Mammary epithelial cell (primary cell): ENCODE measurements at regions of chr2 and their contacts with region 1.

Region 1: DNA sequence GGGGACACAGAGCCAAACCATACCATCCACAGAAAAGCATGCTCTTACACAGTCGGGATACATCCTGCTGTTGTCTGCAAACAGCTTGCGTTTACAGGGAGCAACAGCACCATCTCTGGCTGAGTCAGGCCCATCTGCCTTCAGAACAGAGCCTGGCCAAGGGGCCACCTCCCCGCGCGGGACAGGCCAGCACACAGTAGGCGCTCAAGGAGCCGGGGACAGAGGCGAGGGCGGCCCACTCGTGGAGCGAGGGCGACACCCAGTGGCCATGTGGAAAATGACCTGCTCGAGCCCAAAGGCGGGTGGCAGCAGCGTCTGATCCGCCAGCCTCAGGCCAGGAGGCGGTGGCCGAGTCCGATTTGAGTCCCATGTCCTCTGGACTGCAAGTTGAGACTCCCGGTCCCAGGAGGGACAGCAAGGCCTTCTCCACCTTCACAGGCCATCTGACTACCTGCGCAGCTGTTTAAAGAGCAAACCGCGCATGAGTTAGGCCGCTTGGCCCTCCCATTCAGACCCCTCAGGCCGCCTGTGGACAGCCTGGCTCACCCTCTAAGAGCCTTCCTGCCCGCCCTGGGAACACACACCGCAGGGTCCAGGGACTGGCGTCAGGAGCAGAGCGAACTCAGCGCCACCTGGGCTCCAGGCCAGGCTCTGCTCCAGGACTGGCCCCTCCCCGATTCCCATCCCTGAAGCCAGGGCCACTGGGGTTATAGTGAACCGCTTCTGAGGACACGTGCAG is 38.3 kb downstream of the TTC32 start:
- DNase-seq: peak; percentile 26
- H3K4me3 ChIP-seq: no peak overlapping the region
- H3K27ac ChIP-seq: no peak overlapping the region
- H3K4me1 ChIP-seq: peaks cover 26% of the 10 kb centered on the region
- H3K27me3 ChIP-seq: no peaks in the 10 kb centered on the region
- CTCF ChIP-seq: peak; percentile 63 to 93

Region 2: DNA sequence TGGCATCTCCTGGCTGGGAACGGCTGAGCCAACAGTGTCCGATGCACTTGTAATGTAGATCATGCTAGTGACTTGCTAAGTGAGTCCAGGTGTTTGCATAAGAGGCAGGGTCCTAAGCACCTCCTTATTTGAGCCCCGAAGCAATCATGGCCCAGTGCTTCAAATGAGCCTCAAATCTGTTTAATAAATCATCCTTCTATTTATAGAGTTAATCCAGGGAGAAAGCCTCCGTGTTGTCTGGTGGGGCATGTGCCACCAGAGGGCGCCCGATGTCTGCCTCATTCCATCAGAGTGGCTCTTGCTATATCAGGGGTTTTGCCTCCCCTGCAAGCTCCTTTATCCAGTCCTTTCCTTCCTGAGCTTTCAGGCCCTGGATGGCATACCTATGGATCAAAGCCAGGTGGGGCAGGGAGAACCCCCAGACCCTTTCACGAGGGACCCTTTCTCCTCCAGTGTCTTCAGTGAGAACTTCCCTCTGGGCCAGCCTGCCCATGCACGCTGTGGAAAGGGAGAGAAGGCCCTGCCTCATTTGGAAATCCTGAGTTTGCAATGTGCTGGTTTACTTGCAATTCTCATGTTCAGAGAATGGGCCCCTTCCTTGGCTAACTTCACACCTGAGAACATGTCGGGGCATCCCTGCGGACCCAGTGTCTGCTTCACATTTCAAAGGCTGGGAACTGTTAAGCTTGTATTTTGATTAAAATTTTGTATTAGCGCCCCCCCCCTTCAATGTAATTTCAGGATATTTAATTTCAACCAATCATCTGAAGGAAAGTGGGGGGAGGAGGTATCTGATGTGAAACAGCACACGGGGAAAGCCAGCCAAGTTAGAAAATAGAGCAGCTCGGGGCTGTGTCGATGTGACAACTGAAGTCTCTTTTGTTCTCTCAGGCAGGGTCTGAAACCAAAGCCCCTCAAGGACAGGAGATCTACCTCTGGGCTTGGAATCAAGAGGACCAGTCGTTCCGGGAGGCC is 1342.7 kb before region 1 on chr2:
- CTCF ChIA-PET with region 1: no interaction called
- dilution Hi-C with region 1: loop called (anchors 25 kb)
- in situ Hi-C with region 1: loop called (anchors 10 to 25 kb)
- intact Hi-C with region 1: loop called (anchors 2 kb)
- DNase-seq: peak; percentile 50
- H3K4me3 ChIP-seq: no peak overlapping the region
- H3K27ac ChIP-seq: no peak overlapping the region
- H3K4me1 ChIP-seq: no peaks in the 10 kb centered on the region
- H3K27me3 ChIP-seq: no peaks in the 10 kb centered on the region
- CTCF ChIP-seq: peak; percentile 91 to 92

Region 3: DNA sequence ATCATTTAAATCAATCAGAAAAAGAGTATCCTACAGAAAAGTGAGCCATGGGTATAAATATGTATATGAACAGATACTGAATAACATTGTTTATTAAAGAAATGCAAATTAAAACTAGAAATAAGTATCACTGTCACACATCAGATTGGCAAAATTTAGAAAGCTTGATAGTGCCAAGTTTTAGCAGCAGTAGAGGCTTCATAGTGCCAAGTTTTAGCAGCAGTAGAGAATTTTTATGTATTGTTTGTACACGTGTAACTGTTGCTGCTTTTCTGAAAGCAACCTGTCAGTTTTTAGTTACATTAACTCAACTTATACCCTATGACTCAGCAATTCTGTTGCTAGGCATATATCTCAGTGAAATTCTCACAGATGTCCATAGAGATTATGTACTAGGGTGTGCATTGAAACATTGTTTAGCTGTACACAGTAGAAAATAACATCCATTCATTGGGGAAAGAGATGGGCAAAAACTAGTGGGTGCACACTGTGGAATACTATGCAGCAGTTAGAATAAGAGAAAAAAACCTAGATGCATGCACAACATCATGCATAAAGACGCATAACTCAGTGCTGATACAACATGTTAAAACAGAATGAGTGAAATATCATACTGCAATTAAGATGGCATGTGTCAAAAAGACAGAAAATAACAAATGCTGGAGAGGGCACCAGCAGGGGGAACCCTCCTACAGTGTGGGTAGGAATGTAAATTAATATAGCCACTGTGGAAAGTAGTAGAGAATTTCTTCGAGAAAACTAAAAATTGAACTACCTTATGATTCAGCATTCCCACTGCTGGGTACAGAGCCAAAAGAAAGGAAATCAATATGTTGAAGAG is 979.6 kb before region 1 on chr2:
- CTCF ChIA-PET with region 1: no interaction called
- dilution Hi-C with region 1: no loop called
- in situ Hi-C with region 1: no loop called
- intact Hi-C with region 1: loop called (anchors 10 kb)
- DNase-seq: peak; percentile 32
- H3K4me3 ChIP-seq: no peak overlapping the region
- H3K27ac ChIP-seq: no peak overlapping the region
- H3K4me1 ChIP-seq: no peaks in the 10 kb centered on the region
- H3K27me3 ChIP-seq: no peaks in the 10 kb centered on the region
- CTCF ChIP-seq: peak; percentile 63 to 64

Region 4: GRCh38 chr2:19667085-19667484 is 196.4 kb before region 1 on chr2:
- CTCF ChIA-PET with region 1: no interaction called
- dilution Hi-C with region 1: no loop called
- in situ Hi-C with region 1: no loop called
- intact Hi-C with region 1: loop called (anchors 1 kb)
- DNase-seq: peak; percentile 54
- H3K4me3 ChIP-seq: no peak overlapping the region
- H3K27ac ChIP-seq: no peak overlapping the region
- H3K4me1 ChIP-seq: peaks cover 16% of the 10 kb centered on the region
- H3K27me3 ChIP-seq: no peaks in the 10 kb centered on the region
- CTCF ChIP-seq: peak; percentile 28 to 63

Region 5: DNA sequence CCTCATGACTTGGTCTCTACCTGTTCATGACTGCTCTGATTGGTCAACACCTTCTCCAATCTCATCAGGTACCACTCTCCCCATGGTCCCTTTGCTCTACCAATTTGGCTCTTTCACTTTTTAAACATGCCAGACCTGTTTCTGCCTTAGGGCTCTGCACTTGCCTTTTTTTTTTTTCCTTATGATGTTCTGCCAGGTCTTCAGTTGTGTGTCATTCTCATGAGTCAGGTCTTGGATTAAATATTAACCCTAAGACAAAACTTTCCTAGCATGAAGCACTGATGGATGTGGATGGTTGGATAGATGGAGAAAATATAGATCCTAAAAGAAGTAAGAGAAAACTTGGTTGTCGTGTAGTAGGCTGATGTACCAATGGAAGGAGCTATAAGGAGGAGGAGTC is 181.0 kb before region 1 on chr2:
- CTCF ChIA-PET with region 1: no interaction called
- dilution Hi-C with region 1: no loop called
- in situ Hi-C with region 1: no loop called
- intact Hi-C with region 1: no loop called
- DNase-seq: peak; percentile 60
- H3K4me3 ChIP-seq: no peak overlapping the region
- H3K27ac ChIP-seq: no peak overlapping the region
- H3K4me1 ChIP-seq: no peaks in the 10 kb centered on the region
- H3K27me3 ChIP-seq: no peaks in the 10 kb centered on the region
- CTCF ChIP-seq: no peak

Region 6: DNA sequence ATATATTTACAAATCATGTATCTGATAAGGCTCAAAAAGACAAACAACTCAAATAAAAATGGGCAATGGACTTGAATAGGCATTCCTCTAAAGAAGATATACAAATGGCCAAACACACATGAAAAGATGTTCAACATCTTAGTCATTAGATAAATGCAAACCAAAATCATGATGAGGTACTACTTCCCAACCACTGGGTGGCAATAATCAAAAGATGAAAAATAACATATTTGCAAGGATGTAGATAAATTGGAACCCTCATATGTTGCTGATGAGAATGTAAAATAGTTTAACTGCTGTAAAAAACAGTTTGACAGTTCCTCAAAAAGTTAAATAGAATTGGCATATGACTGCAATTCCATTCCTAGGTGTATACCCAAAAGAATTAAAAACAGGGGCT is 94.0 kb before region 1 on chr2:
- CTCF ChIA-PET with region 1: no interaction called
- dilution Hi-C with region 1: no loop called
- in situ Hi-C with region 1: no loop called
- intact Hi-C with region 1: loop called (anchors 1 kb)
- DNase-seq: no peak
- H3K4me3 ChIP-seq: no peak overlapping the region
- H3K27ac ChIP-seq: no peak overlapping the region
- H3K4me1 ChIP-seq: no peaks in the 10 kb centered on the region
- H3K27me3 ChIP-seq: no peaks in the 10 kb centered on the region
- CTCF ChIP-seq: peak; percentile 40 to 53